Activated T-helper 1 cell treated with anti-CD3 and anti-CD28 coated beads, Interleukin-12 subunit alpha, Interleukin-12 subunit beta, Interleukin-2, Interleukin-4 antibody, amounts not matched to agents 30 ng/mL and 10 ng/mL and 1 ng/mL, durations not matched to agents 14 hours and 24 hours and 36 hours (primary cell): ENCODE measurements at regions of chr16 and their contacts with region 1.

Region 1: DNA sequence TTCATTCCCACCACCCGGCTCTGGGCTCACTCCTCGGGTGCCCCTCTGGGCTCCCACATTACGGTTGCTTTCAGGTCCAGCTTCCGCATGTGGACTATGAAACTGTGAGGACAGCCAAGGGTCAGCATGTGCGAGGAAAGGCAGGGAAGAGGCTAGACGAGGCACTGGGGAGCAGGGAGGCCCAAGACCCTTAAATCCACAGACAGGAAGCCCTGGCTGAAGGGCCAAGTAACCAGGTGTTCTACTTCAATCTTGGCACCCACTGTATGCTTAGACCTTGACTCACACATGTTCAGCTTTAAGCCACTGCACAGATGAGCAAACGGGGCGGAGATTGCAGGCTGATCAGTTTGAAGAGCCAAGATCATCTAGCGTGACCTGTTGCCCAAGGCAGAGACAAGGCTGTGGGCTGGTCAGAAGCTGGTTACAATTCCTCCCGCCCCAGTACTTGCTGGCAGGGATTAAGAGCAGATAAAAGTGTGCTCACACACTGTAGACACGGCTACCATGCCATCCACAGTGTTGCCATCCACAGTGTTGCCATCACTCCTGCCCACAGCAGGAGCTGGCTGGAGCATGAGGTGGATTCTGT is at the start of gene CES4A:
- DNase-seq: no peak
- H3K4me3 Mint-ChIP-seq: no peak within 1 kb of the TSS
- H3K27ac Mint-ChIP-seq: peak within 1 kb of the TSS; percentile 73
- H3K4me1 Mint-ChIP-seq: peaks cover 32% of the 10 kb centered on the region
- H3K27me3 Mint-ChIP-seq: no peaks in the 10 kb centered on the region
- total RNA-seq, gene CES4A: 33.2 and 34.2 TPM in 2 replicates

Region 2: DNA sequence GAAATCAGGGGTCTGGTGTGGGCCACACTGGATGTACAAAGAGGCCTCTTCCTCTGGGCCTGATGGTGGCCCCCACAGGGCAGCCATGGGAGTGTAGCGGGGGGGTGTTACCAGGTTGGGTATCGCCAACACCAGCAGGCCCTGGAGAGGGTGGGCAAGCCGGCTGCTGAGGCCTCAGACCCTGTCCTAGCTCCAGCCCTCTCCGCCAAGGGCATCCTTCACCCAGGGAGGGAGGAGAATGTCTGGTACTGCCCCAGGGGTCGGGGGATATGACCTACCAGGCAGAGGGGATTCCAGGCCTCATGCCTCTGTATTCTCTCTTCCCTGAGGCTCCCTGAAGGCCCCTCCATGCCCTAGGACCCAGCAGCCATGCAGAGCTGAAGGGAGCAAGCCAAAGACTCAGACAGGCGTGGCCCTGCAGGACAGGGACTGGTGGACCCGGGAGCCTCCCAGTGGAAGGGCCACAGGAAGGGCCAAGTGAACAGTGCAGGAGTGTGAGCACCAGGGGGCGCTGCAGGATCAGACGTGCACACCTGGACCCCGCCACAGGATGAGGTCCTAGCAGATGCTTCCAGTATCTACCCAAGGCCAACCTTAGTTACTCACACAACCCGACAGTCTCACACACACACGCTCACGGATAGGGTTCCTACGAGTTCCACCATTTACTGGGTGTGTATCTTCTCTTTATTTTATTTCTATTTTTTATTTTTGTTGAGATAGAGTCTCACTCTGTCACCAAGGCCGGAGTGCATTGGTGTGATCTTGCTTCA is 10.8 kb before region 1 on chr16:
- intact Hi-C with region 1: loop called (anchors 1 kb)
- DNase-seq: peak; percentile 83
- H3K4me3 Mint-ChIP-seq: no peak overlapping the region
- H3K27ac Mint-ChIP-seq: peak overlapping the region; percentile 75
- H3K4me1 Mint-ChIP-seq: peaks cover 57% of the 10 kb centered on the region
- H3K27me3 Mint-ChIP-seq: no peaks in the 10 kb centered on the region

Region 3: GRCh38 chr16:67028555-67029248 is 40.4 kb after region 1 on chr16 and contains the start of gene CBFB:
- intact Hi-C with region 1: loop called (anchors 1 kb)
- DNase-seq: peak; percentile 94
- H3K4me3 Mint-ChIP-seq: peak within 1 kb of the TSS; percentile 93
- H3K27ac Mint-ChIP-seq: peak within 1 kb of the TSS; percentile 94
- H3K4me1 Mint-ChIP-seq: peaks cover 61% of the 10 kb centered on the region
- H3K27me3 Mint-ChIP-seq: no peaks in the 10 kb centered on the region
- total RNA-seq, gene CBFB: 171 and 175 TPM in 2 replicates

Region 4: GRCh38 chr16:67183627-67184328 is 195.5 kb after region 1 on chr16 and contains the start of gene MATCAP1:
- intact Hi-C with region 1: loop called (anchors 1 kb)
- DNase-seq: peak; percentile 94
- H3K4me3 Mint-ChIP-seq: peak within 1 kb of the TSS; percentile 62
- H3K27ac Mint-ChIP-seq: no peak within 1 kb of the TSS
- H3K4me1 Mint-ChIP-seq: peaks cover 20% of the 10 kb centered on the region
- H3K27me3 Mint-ChIP-seq: peaks cover 8% of the 10 kb centered on the region
- total RNA-seq, gene MATCAP1: 45.5 and 48.2 TPM in 2 replicates